ENCODE measurements at regions of chr2 and their contacts with region 1.

Region 1: GRCh38 chr2:100242891-100243619 is 79.2 kb downstream of the LONRF2 start:
- DNase-seq: peak; percentile 56
- H3K4me3 ChIP-seq: no peak overlapping the region
- H3K27ac ChIP-seq: no peak overlapping the region
- H3K4me1 ChIP-seq: no peaks in the 10 kb centered on the region
- H3K27me3 ChIP-seq: no peaks in the 10 kb centered on the region
- CTCF ChIP-seq: peak; percentile 51

Region 2: GRCh38 chr2:99559075-99559662 is 683.9 kb before region 1 on chr2:
- intact Hi-C with region 1: loop called (anchors 5 kb)
- DNase-seq: peak; percentile 82
- H3K4me3 ChIP-seq: no peak overlapping the region
- H3K27ac ChIP-seq: no peak overlapping the region
- H3K4me1 ChIP-seq: no peaks in the 10 kb centered on the region
- H3K27me3 ChIP-seq: no peaks in the 10 kb centered on the region
- CTCF ChIP-seq: peak; percentile 99

Region 3: DNA sequence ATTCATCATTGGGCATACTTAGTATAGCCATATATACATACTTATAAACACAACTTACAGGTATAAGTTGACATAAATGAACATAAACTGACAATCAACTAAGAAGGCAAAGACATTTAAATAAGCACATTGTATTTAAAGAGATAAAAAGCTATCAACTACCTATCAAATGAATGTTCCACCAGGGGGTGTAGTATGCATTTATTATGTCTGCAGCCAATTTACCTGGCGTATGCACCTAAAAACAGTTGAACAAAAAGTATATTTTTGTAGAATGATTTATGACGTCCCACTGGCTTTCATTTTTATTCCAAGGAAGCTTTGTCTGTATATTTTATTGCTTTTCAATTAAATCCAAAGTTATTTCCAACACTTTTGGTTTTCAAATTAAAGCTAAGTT is 424.2 kb before region 1 on chr2:
- intact Hi-C with region 1: loop called (anchors 10 kb)
- DNase-seq: no peak
- H3K4me3 ChIP-seq: no peak overlapping the region
- H3K27ac ChIP-seq: no peak overlapping the region
- H3K4me1 ChIP-seq: no peaks in the 10 kb centered on the region
- H3K27me3 ChIP-seq: no peaks in the 10 kb centered on the region
- CTCF ChIP-seq: no peak

Region 4: DNA sequence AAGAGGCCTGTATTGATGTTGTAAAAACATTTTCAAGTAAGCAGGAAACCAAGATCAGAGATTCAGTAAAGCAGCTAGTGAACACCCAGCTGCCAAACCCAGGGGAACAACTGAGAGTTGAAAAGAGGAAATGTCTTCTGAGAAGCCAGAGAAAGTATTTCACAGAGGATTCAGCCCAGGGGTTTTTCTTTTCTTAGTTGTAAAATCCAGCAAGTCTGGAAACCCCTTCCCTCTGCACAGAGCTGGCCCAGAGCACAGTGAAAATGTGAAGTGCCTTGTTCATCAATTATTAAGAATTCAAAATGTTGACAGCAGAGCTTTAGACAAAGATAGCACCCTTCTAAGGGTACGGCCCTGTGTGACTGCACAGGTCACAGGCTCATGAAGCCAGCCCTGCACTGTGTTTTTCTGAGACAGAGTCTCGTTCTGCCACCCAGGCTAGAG is 129.0 kb before region 1 on chr2:
- intact Hi-C with region 1: no loop called
- DNase-seq: no peak
- H3K4me3 ChIP-seq: no peak overlapping the region
- H3K27ac ChIP-seq: no peak overlapping the region
- H3K4me1 ChIP-seq: no peaks in the 10 kb centered on the region
- H3K27me3 ChIP-seq: no peaks in the 10 kb centered on the region
- CTCF ChIP-seq: no peak

Region 5: GRCh38 chr2:100327742-100328141 is 84.7 kb after region 1 on chr2:
- intact Hi-C with region 1: no loop called
- DNase-seq: no peak
- H3K4me3 ChIP-seq: no peak overlapping the region
- H3K27ac ChIP-seq: no peak overlapping the region
- H3K4me1 ChIP-seq: no peaks in the 10 kb centered on the region
- H3K27me3 ChIP-seq: peaks cover 5% of the 10 kb centered on the region
- CTCF ChIP-seq: no peak

Region 6: DNA sequence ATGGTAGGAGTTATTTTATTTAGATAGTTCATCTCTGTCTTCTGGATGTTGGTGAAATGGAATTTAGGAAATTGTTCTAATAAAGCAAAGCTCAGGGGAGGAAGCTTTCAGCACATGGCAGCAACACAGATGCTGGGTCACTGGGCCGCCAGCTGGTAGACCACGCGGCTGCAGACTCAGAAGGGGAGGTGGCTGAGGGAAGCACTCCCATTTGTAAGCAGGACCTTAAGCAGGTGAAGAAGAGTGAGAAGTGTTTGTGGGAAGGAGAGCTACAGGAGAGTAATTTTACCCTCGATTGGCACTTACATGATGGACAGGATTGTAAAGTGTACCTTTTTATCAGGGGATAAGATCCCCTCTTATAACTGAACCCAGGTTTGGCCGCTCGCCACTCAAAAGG is 251.7 kb after region 1 on chr2:
- intact Hi-C with region 1: no loop called
- DNase-seq: no peak
- H3K4me3 ChIP-seq: no peak overlapping the region
- H3K27ac ChIP-seq: no peak overlapping the region
- H3K4me1 ChIP-seq: no peaks in the 10 kb centered on the region
- H3K27me3 ChIP-seq: no peaks in the 10 kb centered on the region
- CTCF ChIP-seq: no peak